Naive thymus-derived CD4-positive, alpha-beta T cell (primary cell): ENCODE measurements at regions of chrX and their contacts with region 1.

Region 1: GRCh38 chrX:153971450-153972367 is at the start of gene HCFC1:
- DNase-seq: peak; percentile 82 to 98 (median 93)
- ATAC-seq: peak; percentile 65
- H3K4me3 ChIP-seq: peak within 1 kb of the TSS; percentile 97
- H3K4me3 Mint-ChIP-seq: peak within 1 kb of the TSS; percentile 91 to 100 (median 100)
- H3K27ac ChIP-seq: peak within 1 kb of the TSS; percentile 99
- H3K27ac Mint-ChIP-seq: peak within 1 kb of the TSS; percentile 93 to 100 (median 100)
- H3K4me1 ChIP-seq: peaks cover 28 to 29% of the 10 kb centered on the region in 2 donors
- H3K4me1 Mint-ChIP-seq: peaks cover 21 to 52% (median 34%) of the 10 kb centered on the region in 7 donors
- H3K27me3 ChIP-seq: no peaks in the 10 kb centered on the region
- H3K27me3 Mint-ChIP-seq: no peaks in the 10 kb centered on the region
- total RNA-seq, gene HCFC1: 52.3 to 106 (median 67.2) TPM

Region 2: DNA sequence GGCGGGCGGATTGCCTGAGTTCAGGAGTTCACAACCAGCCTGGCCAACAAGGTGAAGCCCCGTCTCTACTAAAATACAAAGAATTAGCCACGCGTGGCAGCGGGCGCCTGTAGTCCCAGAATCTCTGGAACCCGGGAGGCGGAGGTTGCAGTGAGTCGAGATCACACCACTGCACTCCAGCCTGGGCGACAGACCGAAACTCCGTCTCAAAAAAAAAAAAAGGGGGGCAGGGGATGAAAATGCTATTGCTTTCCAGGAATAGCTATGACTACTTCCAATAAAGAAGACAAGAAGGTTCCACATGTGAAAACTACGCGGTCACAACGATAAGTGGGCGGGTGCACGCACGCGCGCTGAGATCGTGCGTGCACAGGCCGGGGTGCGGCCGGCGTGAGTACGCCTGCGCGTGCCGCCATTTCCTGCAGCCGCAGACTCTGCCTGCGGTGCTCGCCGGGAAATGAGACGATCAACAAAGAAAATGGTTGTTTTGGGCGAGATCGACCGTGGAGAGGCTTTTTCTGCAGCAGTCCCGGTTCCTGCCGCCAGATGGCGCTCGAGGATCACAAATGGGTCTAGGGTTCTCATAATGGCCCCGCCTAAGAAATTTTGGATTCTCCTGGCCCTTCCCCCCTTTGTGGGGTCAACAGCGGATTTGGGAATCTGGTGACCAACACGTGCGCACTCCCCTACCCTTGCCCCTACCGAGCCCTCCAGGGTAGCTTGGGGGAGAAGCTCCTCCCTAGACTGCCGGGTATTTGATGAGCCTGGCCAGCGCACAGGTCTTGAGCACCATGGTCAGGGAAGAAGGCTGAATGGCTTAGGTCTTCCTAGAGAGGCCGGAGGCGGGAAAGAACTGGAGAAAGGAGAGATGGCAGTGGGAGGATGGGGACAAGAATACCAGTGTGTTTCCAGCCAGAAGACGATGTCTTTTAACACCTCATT is 1012.9 kb before region 1 on chrX:
- CTCF ChIA-PET with region 1: no interaction called
- POLR2A ChIA-PET with region 1: no interaction called
- intact Hi-C with region 1: loop called in 1 of 2 experiments (anchors 5 kb)
- DNase-seq: peak; percentile 79 to 95 (median 89)
- ATAC-seq: peak; percentile 98
- H3K4me3 ChIP-seq: peak overlapping the region; percentile 52
- H3K4me3 Mint-ChIP-seq: peak overlapping the region; percentile 71 to 87 (median 77)
- H3K27ac ChIP-seq: peak overlapping the region; percentile 72
- H3K27ac Mint-ChIP-seq: peak overlapping the region; percentile 89 to 97 (median 93)
- H3K4me1 ChIP-seq: peaks cover 0 to 8% of the 10 kb centered on the region in 2 donors
- H3K4me1 Mint-ChIP-seq: peaks cover 0 to 12% (median 4%) of the 10 kb centered on the region in 7 donors
- H3K27me3 ChIP-seq: no peaks in the 10 kb centered on the region
- H3K27me3 Mint-ChIP-seq: peaks cover 0 to 4% (median 0%) of the 10 kb centered on the region in 5 donors

Region 3: GRCh38 chrX:153708415-153708814 is 263.3 kb before region 1 on chrX:
- CTCF ChIA-PET with region 1: no interaction called
- POLR2A ChIA-PET with region 1: no interaction called
- intact Hi-C with region 1: no loop called
- DNase-seq: peak in 7 of 9 donors; percentile 12 to 45 (median 32)
- ATAC-seq: peak; percentile 76
- H3K4me3 ChIP-seq: no peak overlapping the region
- H3K4me3 Mint-ChIP-seq: no peak overlapping the region
- H3K27ac ChIP-seq: peak overlapping the region; percentile 7
- H3K27ac Mint-ChIP-seq: peak overlapping the region in 3 of 9 donors; percentile 49 to 72 (median 54)
- H3K4me1 ChIP-seq: no peaks in the 10 kb centered on the region
- H3K4me1 Mint-ChIP-seq: peaks cover 0 to 11% (median 6%) of the 10 kb centered on the region in 7 donors
- H3K27me3 ChIP-seq: no peaks in the 10 kb centered on the region
- H3K27me3 Mint-ChIP-seq: no peaks in the 10 kb centered on the region

Region 4: GRCh38 chrX:153794018-153794896 is 177.5 kb before region 1 on chrX and contains the starts of genes IDH3G and SSR4:
- CTCF ChIA-PET with region 1: no interaction called
- POLR2A ChIA-PET with region 1: interaction called, 5 read pairs
- intact Hi-C with region 1: loop called in 1 of 2 experiments (anchors 1 kb)
- DNase-seq: peak; percentile 83 to 96 (median 93)
- ATAC-seq: peak; percentile 97
- H3K4me3 ChIP-seq: peak within 1 kb of the TSS; percentile 75
- H3K4me3 Mint-ChIP-seq: peak within 1 kb of the TSS; percentile 86 to 95 (median 92)
- H3K27ac ChIP-seq: peak within 1 kb of the TSS; percentile 97
- H3K27ac Mint-ChIP-seq: peak within 1 kb of the TSS; percentile 86 to 95 (median 92)
- H3K4me1 ChIP-seq: peaks cover 8 to 12% of the 10 kb centered on the region in 2 donors
- H3K4me1 Mint-ChIP-seq: peaks cover 0 to 39% (median 25%) of the 10 kb centered on the region in 7 donors
- H3K27me3 ChIP-seq: no peaks in the 10 kb centered on the region
- H3K27me3 Mint-ChIP-seq: no peaks in the 10 kb centered on the region
- total RNA-seq, gene IDH3G: 44.1 to 73.1 (median 57.0) TPM
- total RNA-seq, gene SSR4: 156 to 299 (median 168) TPM

Region 5: DNA sequence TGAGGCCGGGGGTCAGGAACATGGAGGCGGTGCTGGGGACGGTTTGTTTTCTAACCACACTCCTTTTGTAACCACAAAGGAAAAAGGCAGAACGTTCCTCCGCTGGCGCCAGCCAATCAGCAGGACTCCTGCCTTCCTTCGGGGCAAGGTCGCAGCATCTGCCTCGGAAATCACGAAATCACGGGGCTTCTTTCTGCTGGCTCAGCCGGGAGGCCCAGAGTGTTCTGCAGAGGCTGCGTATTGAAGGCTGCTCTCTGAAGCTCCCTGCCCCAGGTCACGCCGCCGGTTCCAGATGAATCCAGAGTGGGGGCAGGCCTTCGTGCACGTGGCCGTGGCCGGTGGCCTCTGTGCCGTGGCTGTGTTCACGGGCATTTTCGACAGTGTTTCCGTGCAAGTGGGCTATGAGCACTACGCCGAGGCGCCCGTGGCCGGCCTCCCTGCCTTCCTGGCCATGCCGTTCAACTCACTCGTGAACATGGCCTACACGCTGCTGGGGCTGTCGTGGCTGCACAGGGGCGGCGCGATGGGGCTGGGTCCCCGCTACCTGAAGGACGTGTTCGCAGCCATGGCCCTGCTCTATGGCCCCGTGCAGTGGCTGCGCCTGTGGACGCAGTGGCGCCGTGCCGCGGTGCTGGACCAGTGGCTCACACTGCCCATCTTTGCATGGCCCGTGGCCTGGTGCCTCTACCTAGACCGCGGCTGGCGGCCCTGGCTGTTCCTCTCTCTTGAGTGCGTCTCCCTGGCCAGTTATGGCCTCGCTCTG is 10.2 kb after region 1 on chrX:
- CTCF ChIA-PET with region 1: interaction called, 10 read pairs
- POLR2A ChIA-PET with region 1: interaction called, 53 read pairs
- intact Hi-C with region 1: loop called (anchors 1 kb)
- DNase-seq: peak in 8 of 9 donors; percentile 58 to 69 (median 65)
- ATAC-seq: peak; percentile 51
- H3K4me3 ChIP-seq: peak overlapping the region; percentile 25
- H3K4me3 Mint-ChIP-seq: peak overlapping the region; percentile 70 to 86 (median 78)
- H3K27ac ChIP-seq: peak overlapping the region; percentile 68
- H3K27ac Mint-ChIP-seq: peak overlapping the region; percentile 89 to 97 (median 96)
- H3K4me1 ChIP-seq: peaks cover 37 to 41% of the 10 kb centered on the region in 2 donors
- H3K4me1 Mint-ChIP-seq: peaks cover 18 to 55% (median 32%) of the 10 kb centered on the region in 7 donors
- H3K27me3 ChIP-seq: no peaks in the 10 kb centered on the region
- H3K27me3 Mint-ChIP-seq: no peaks in the 10 kb centered on the region

Region 6: DNA sequence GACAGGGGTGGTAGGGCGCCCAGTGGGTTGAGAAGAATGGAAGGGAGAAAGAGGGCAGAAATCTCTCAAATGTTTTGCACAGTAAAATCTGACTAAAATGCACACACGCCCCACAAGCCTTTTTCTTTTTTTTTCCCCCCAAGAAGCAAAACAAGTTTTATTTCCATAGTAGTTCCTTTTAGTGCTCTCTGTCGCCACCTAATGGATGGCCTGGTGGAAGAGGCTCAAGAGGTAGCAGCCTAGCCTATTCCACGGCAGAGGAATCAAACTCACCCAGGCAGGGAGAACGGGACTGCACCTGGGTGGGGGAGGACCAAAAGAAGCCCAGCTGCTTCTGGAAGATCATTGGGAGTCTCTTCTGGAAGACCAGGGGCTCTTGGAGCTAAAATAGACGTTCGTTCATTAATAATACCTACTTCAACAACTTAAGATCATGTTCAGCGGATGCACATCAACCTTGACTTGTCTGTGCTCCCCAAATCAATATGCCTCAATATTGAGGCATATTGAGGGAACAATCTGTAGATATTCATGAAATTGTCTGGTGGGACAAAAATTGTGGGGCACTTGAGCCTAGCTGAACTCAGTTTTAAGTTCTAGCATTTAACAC is 79.6 kb after region 1 on chrX:
- CTCF ChIA-PET with region 1: interaction called, 4 read pairs
- POLR2A ChIA-PET with region 1: no interaction called
- intact Hi-C with region 1: loop called in 1 of 2 experiments (anchors 1 kb)
- DNase-seq: peak; percentile 33 to 76 (median 66)
- ATAC-seq: peak; percentile 87
- H3K4me3 ChIP-seq: no peak overlapping the region
- H3K4me3 Mint-ChIP-seq: peak overlapping the region in 5 of 10 donors; percentile 21 to 45 (median 30)
- H3K27ac ChIP-seq: peak overlapping the region; percentile 11
- H3K27ac Mint-ChIP-seq: peak overlapping the region in 8 of 9 donors; percentile 20 to 84 (median 49)
- H3K4me1 ChIP-seq: no peaks in the 10 kb centered on the region
- H3K4me1 Mint-ChIP-seq: peaks cover 30 to 56% (median 47%) of the 10 kb centered on the region in 7 donors
- H3K27me3 ChIP-seq: no peaks in the 10 kb centered on the region
- H3K27me3 Mint-ChIP-seq: no peaks in the 10 kb centered on the region

Region 7: GRCh38 chrX:154397819-154398724 is 426.4 kb after region 1 on chrX and contains the start of gene RPL10:
- CTCF ChIA-PET with region 1: no interaction called
- POLR2A ChIA-PET with region 1: interaction called, 4 read pairs
- intact Hi-C with region 1: loop called in 1 of 2 experiments (anchors 5 kb)
- DNase-seq: peak; percentile 67 to 90 (median 86)
- ATAC-seq: peak; percentile 90
- H3K4me3 ChIP-seq: peak within 1 kb of the TSS; percentile 95
- H3K4me3 Mint-ChIP-seq: peak within 1 kb of the TSS; percentile 93 to 100 (median 98)
- H3K27ac ChIP-seq: peak within 1 kb of the TSS; percentile 97
- H3K27ac Mint-ChIP-seq: peak within 1 kb of the TSS; percentile 97 to 100 (median 99)
- H3K4me1 ChIP-seq: peaks cover 10 to 14% of the 10 kb centered on the region in 2 donors
- H3K4me1 Mint-ChIP-seq: peaks cover 6 to 22% (median 14%) of the 10 kb centered on the region in 7 donors
- H3K27me3 ChIP-seq: no peaks in the 10 kb centered on the region
- H3K27me3 Mint-ChIP-seq: peaks cover 0 to 5% (median 0%) of the 10 kb centered on the region in 5 donors
- total RNA-seq, gene RPL10: 2,926 to 5,130 (median 5,063) TPM